Activated CD4-positive, alpha-beta memory T cell treated with anti-CD3 and anti-CD28 coated beads for 36 hours (primary cell): ENCODE measurements at regions of chr2 and their contacts with region 1.

Region 1: DNA sequence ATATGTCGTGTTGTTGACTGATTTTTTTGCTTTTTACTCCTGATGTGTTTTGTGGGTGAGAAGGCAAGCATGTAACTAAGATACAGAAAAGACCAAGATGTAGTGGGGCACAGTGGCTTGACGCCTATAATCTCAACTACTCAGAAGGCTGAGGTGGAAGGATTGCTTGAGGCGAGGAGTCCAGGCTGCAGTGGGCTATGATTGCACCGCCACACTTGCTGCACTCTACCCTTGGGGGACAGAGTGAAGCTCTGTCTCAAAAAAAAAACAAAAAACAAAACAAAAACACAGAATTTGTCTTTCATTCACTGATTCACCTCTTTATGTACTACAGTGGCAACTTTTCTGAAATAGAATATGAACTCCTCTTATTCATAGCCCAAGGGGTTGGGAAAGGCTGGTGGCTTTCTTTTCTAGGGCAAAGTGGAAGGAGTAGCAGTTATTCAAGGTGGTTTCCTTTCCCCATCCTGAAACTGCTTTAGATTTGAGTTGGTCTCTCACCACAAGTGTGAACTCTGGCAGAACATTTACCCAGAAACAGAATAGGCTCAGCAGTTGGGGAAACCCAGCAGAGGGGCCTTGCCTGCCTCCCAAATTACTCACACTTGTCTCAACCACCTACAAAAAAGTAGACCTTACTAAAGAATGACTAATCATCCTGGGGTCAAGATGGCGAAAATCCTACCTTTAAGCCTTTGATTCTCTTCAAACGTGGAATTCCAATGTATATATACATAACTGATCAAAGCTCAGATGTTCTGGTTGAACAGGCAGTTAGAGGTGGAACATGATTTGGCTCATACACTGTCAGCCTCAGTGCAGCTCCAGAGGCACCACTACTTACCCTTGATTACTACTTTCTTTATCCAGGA is 6.5 kb downstream of the TANK start:
- DNase-seq: peak; percentile 87
- H3K4me3 Mint-ChIP-seq: peak overlapping the region; percentile 34
- H3K27ac Mint-ChIP-seq: peak overlapping the region; percentile 91
- H3K4me1 Mint-ChIP-seq: peaks cover 84% of the 10 kb centered on the region
- H3K27me3 Mint-ChIP-seq: no peaks in the 10 kb centered on the region

Region 2: GRCh38 chr2:160269803-160270570 is 896.8 kb before region 1 on chr2:
- CTCF ChIA-PET with region 1: no interaction called
- POLR2A ChIA-PET with region 1: no interaction called
- intact Hi-C with region 1: loop called (anchors 2 kb)
- DNase-seq: peak; percentile 81
- H3K4me3 Mint-ChIP-seq: peak overlapping the region; percentile 63
- H3K27ac Mint-ChIP-seq: peak overlapping the region; percentile 28
- H3K4me1 Mint-ChIP-seq: peaks cover 45% of the 10 kb centered on the region
- H3K27me3 Mint-ChIP-seq: peaks cover 5% of the 10 kb centered on the region

Region 3: GRCh38 chr2:161104054-161104553 is 62.7 kb before region 1 on chr2:
- CTCF ChIA-PET with region 1: no interaction called
- POLR2A ChIA-PET with region 1: no interaction called
- intact Hi-C with region 1: loop called (anchors 1 kb)
- DNase-seq: peak; percentile 22
- H3K4me3 Mint-ChIP-seq: no peak overlapping the region
- H3K27ac Mint-ChIP-seq: no peak overlapping the region
- H3K4me1 Mint-ChIP-seq: peaks cover 19% of the 10 kb centered on the region
- H3K27me3 Mint-ChIP-seq: no peaks in the 10 kb centered on the region

Region 4: DNA sequence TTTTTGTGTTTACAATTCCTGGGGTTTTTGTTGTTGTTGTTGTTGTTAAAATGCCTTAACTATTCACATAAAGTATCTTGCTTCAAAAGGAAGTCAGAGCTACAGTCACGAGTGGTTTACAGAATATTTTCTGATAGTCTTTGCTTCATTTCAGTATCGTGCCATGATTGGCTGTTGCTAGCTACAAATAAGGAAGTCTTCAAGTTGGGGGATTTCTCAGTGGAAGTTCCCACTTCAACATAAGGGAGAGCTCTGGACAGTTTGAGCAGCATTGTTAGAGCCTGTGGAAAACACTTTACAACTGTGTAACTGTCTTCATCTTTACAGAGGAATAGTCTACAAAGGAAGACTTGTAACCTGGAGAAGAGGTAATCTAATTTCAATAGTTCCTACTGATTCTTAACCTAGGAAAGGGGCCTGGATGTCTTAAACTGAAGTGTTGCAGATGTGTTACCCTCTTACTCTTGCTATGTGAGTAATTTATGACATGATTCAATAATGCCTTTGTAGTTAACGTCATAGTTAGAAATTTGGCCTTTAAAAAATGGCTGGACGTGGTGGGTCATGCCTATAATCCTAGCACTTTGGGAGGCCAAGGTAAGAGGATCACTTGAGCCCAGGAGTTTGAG is 30.0 kb before region 1 on chr2:
- CTCF ChIA-PET with region 1: interaction called, 3 read pairs
- POLR2A ChIA-PET with region 1: interaction called, 10 read pairs
- intact Hi-C with region 1: loop called (anchors 1 kb)
- DNase-seq: peak; percentile 35
- H3K4me3 Mint-ChIP-seq: peak overlapping the region; percentile 96
- H3K27ac Mint-ChIP-seq: peak overlapping the region; percentile 100
- H3K4me1 Mint-ChIP-seq: peaks cover 45% of the 10 kb centered on the region
- H3K27me3 Mint-ChIP-seq: no peaks in the 10 kb centered on the region

Region 5: GRCh38 chr2:162073888-162074645 is 907.3 kb after region 1 on chr2 and contains the start of gene DPP4:
- CTCF ChIA-PET with region 1: no interaction called
- POLR2A ChIA-PET with region 1: no interaction called
- intact Hi-C with region 1: loop called (anchors 2 kb)
- DNase-seq: peak; percentile 69
- H3K4me3 Mint-ChIP-seq: peak within 1 kb of the TSS; percentile 90
- H3K27ac Mint-ChIP-seq: peak within 1 kb of the TSS; percentile 82
- H3K4me1 Mint-ChIP-seq: peaks cover 52% of the 10 kb centered on the region
- H3K27me3 Mint-ChIP-seq: no peaks in the 10 kb centered on the region
- total RNA-seq, gene DPP4: 29.9 to 30.7 TPM